ENCODE measurements at regions of chr20 and their contacts with region 1.

Region 1: DNA sequence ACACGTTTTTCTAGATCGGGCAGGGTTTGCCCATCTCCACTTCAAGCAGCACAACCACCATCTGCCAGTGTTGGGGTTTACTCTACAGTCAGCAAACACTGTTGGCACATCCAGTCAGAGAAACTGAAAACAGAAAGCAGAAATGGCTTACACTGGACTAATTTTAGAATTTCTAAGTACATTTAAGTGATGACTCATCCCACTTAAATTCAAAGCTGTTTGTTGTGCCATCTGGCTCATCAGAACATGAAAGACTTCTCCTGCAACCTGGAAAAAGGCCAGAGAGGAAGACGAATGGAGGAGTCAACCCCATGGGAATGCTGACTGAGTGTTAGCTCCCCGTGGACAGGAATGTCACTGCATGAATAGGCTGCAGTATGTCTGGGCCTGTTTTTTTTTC is 21.8 kb downstream of the FAM209B start:
- DNase-seq: peak; percentile 83
- ATAC-seq: peak; percentile 92
- H3K4me3 ChIP-seq: no peak overlapping the region
- H3K27ac ChIP-seq: peak overlapping the region; percentile 17; the same call in 1 of the 2 replicates
- H3K4me1 ChIP-seq: peaks cover 16% of the 10 kb centered on the region
- H3K27me3 ChIP-seq: no peaks in the 10 kb centered on the region
- CTCF ChIP-seq: no peak
- EP300 ChIP-seq: 0 out of 4 replicates have a peak, but pooled peaks of 1 of the 2 experiments have one; percentile 44
- POLR2A ChIP-seq: no peak
- RAD21 ChIP-seq: no peak

Region 2: DNA sequence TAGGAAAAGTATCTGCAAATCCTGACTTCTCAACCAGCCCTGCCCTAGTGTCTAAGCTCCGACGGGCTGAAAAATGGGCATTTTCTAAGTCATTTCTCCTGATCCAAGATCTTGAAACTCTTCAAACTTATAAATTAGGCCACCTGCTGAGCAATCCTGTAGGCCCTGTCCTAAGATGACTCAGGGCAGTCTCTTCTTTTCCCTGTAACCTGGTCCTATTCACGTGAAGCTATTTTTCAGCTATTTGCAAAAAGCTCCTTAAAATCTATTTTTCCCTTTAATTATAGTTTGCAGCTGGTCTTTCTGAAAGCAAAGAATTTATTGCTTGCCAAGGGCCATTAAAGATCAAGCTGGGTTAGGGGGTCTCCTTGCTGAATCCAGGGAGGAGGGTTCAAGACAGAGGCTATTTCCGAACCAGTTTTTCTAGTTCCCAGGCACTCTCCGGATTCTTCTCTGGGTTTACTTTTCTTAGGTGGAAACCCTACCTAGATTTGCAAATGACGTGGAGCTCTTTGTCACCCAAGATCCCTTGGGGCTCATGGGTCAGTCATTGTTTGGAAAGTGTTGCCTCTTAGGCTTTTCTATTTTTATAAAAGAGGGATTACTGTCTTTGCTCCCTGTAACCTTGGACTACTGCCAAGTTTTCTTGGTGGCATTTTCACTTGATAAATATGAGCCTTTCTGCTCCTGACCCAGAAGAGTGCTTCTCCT is 11.6 kb after region 1 on chr20:
- CTCF ChIA-PET with region 1: interaction called, 15 read pairs
- POLR2A ChIA-PET with region 1: no interaction called
- RAD21 ChIA-PET with region 1: interaction called, 3 read pairs
- SMC1A ChIA-PET with region 1: interaction called, 8 read pairs
- in situ Hi-C with region 1: no loop called
- intact Hi-C with region 1: no loop called
- DNase-seq: no peak
- ATAC-seq: no peak
- H3K4me3 ChIP-seq: no peak overlapping the region
- H3K27ac ChIP-seq: no peak overlapping the region
- H3K4me1 ChIP-seq: no peaks in the 10 kb centered on the region
- H3K27me3 ChIP-seq: no peaks in the 10 kb centered on the region
- CTCF ChIP-seq: no peak
- EP300 ChIP-seq: no peak
- POLR2A ChIP-seq: no peak
- RAD21 ChIP-seq: no peak

Region 3: DNA sequence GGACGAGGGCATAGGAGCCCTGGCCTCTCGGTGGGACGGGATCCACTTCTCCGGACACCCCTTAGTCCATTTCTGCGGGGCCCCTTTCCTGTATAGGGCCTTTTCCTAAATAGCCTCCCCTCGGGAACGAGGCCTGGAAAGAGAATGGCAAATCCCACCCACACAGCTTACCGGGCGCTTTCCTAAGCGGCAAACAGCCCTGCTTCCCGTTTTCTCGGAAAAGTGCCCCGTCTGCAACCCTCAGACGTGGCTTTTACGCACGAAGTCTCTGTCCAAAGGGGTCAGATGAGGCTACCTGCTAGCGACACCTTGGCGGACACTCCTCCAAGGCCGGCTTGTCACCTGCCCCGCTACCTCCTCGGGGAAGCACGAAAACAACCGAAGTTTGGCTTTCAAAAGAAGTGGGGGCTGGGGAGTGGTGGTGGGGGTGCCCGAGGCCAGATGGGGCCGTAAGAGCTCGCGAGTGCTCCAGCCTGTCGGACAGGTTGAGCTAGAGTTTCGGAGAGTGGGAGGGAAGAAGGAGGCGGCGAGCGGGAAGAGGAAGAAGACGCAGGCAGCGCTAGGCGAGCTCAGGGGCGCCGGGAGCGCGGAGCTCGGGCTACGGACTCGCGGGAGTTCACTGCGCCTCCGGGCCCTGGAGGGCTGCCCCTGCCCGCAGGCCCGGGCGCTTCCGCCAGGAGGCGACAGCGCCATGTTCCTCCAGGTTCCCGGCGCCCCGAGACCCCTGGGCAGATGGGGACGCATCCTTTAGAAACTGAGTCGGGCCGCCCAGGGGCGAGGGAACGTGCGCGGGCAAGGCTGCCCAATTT is 75.0 kb after region 1 on chr20:
- CTCF ChIA-PET with region 1: no interaction called
- POLR2A ChIA-PET with region 1: no interaction called
- RAD21 ChIA-PET with region 1: no interaction called
- SMC1A ChIA-PET with region 1: no interaction called
- in situ Hi-C with region 1: no loop called
- intact Hi-C with region 1: no loop called
- DNase-seq: no peak
- ATAC-seq: peak; percentile 31; the same call in 2 of the 3 replicates
- H3K4me3 ChIP-seq: no peak overlapping the region
- H3K27ac ChIP-seq: no peak overlapping the region
- H3K4me1 ChIP-seq: no peaks in the 10 kb centered on the region
- H3K27me3 ChIP-seq: peaks cover 14 to 22% of the 10 kb centered on the region in 2 experiments
- CTCF ChIP-seq: peak; percentile 4 to 18 (median 10); a peak in 2 of 6 replicates
- EP300 ChIP-seq: no peak
- POLR2A ChIP-seq: no peak
- RAD21 ChIP-seq: no peak

Region 4: GRCh38 chr20:56974499-56975236 is 419.8 kb after region 1 on chr20:
- CTCF ChIA-PET with region 1: interaction called, 19 read pairs
- POLR2A ChIA-PET with region 1: no interaction called
- RAD21 ChIA-PET with region 1: interaction called, 16 read pairs
- SMC1A ChIA-PET with region 1: interaction called, 3 read pairs
- in situ Hi-C with region 1: no loop called
- intact Hi-C with region 1: loop called (anchors 1 kb)
- DNase-seq: no peak
- ATAC-seq: peak; percentile 46; the same call in 2 of the 3 replicates
- H3K4me3 ChIP-seq: no peak overlapping the region
- H3K27ac ChIP-seq: no peak overlapping the region
- H3K4me1 ChIP-seq: no peaks in the 10 kb centered on the region
- H3K27me3 ChIP-seq: no peaks in the 10 kb centered on the region; a peak in 1 of 4 replicates
- CTCF ChIP-seq: peak; percentile 38 to 46 (median 43); a peak in 5 of 6 replicates
- EP300 ChIP-seq: no peak
- POLR2A ChIP-seq: no peak
- RAD21 ChIP-seq: peak; percentile 54

Region 5: DNA sequence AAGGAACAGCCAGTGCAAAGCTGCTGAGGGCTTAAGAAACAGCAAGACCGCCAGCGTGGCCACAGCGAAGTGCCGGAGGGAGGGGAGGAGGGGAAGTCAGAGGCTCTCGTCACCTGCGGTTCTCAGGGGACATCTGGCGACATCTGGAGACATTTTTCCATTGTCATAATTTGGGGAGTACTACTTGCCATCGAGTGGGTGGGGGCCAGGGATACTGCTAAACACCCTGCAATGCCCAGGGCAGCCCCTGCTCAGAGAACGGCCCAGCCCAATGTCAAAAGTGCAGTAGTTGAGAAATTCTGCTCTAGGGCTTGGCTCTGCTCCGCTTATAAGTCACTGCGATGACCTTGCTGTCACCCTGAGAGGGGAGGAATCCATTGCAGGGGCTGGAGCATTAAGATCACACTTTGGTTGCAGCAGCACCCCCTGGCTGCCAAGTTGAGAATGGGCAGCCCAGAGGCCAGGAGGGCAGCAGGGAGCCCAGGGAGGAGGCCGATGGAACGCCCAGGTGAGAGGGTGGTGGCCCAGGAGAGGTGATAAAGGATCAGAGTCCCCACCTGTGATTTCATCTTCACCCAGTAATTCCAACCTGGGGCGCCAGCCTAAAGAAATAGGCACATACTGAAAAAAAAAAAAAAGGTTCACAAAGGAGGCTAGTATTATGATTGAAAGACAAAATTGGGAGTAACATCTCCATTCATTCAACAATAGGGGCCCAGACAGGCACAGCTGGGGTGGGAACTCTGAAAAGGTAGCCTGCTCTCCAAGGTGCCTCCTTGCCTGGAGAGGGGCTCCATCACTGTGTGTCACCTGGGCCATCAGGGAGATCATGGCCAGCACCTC is 493.4 kb after region 1 on chr20:
- CTCF ChIA-PET with region 1: interaction called, 3 read pairs
- POLR2A ChIA-PET with region 1: no interaction called
- RAD21 ChIA-PET with region 1: no interaction called
- SMC1A ChIA-PET with region 1: no interaction called
- in situ Hi-C with region 1: loop called (anchors 5 kb)
- intact Hi-C with region 1: loop called (anchors 2 kb)
- DNase-seq: no peak
- ATAC-seq: peak; percentile 86
- H3K4me3 ChIP-seq: no peak overlapping the region
- H3K27ac ChIP-seq: no peak overlapping the region
- H3K4me1 ChIP-seq: no peaks in the 10 kb centered on the region
- H3K27me3 ChIP-seq: no peaks in the 10 kb centered on the region; a peak in 1 of 4 replicates
- CTCF ChIP-seq: peak; percentile 56 to 71 (median 65)
- EP300 ChIP-seq: no peak
- POLR2A ChIP-seq: no peak
- RAD21 ChIP-seq: peak; percentile 45

Region 6: DNA sequence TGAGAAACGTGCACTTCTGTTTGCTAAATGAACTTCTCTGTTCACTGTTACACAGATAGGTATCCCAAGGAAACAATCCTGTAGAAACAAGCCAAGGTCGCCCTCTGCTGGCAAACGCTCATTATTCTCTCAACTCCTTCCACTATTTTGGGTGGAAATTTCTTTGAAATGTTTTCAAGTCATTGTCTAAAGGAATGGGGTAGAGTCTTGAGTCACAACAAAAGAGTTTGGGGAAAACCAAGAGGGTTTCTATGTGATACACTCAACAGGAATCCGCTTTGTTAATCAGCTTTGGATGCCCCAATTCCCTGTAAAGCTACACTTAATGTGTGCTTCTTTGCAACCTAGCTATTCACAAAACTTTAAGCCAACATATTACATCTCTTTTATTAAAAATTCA is 791.6 kb after region 1 on chr20:
- CTCF ChIA-PET with region 1: interaction called, 21 read pairs
- POLR2A ChIA-PET with region 1: no interaction called
- RAD21 ChIA-PET with region 1: no interaction called
- SMC1A ChIA-PET with region 1: interaction called, 7 read pairs
- in situ Hi-C with region 1: loop called (anchors 5 kb)
- intact Hi-C with region 1: loop called (anchors 1 kb)
- DNase-seq: no peak
- ATAC-seq: peak; percentile 72
- H3K4me3 ChIP-seq: no peak overlapping the region
- H3K27ac ChIP-seq: no peak overlapping the region
- H3K4me1 ChIP-seq: no peaks in the 10 kb centered on the region
- H3K27me3 ChIP-seq: no peaks in the 10 kb centered on the region
- CTCF ChIP-seq: peak; percentile 71 to 81 (median 77)
- EP300 ChIP-seq: no peak
- POLR2A ChIP-seq: no peak
- RAD21 ChIP-seq: peak; percentile 86